ENCODE measurements at regions of chr1 and their contacts with region 1.

Region 1: GRCh38 chr1:46342084-46342656 is 1.6 kb downstream of the NSUN4 start:
- DNase-seq: peak; percentile 35
- H3K4me3 Mint-ChIP-seq: peak overlapping the region; percentile 99
- H3K27ac Mint-ChIP-seq: peak overlapping the region; percentile 93
- H3K4me1 Mint-ChIP-seq: peaks cover 45% of the 10 kb centered on the region
- H3K27me3 Mint-ChIP-seq: no peaks in the 10 kb centered on the region

Region 2: GRCh38 chr1:46247436-46248121 is 94.6 kb before region 1 on chr1 and contains the start of gene RAD54L:
- CTCF ChIA-PET with region 1: interaction called, 58 read pairs
- DNase-seq: peak; percentile 98
- H3K4me3 Mint-ChIP-seq: peak within 1 kb of the TSS; percentile 96
- H3K27ac Mint-ChIP-seq: peak within 1 kb of the TSS; percentile 88
- H3K4me1 Mint-ChIP-seq: peaks cover 47% of the 10 kb centered on the region
- H3K27me3 Mint-ChIP-seq: peaks cover 5% of the 10 kb centered on the region

Region 3: GRCh38 chr1:46285730-46286477 is 56.3 kb before region 1 on chr1:
- CTCF ChIA-PET with region 1: interaction called, 11 read pairs
- DNase-seq: peak; percentile 57
- H3K4me3 Mint-ChIP-seq: no peak overlapping the region
- H3K27ac Mint-ChIP-seq: peak overlapping the region; percentile 74
- H3K4me1 Mint-ChIP-seq: peaks cover 28% of the 10 kb centered on the region
- H3K27me3 Mint-ChIP-seq: no peaks in the 10 kb centered on the region